HEK293 (cell line): ENCODE measurements at regions of chr20 and their contacts with region 1.

Region 1: GRCh38 chr20:3551681-3552434 is 81.0 kb downstream of the ATRN start:
- H3K4me3 ChIP-seq: no peak overlapping the region
- H3K27ac ChIP-seq: no peak overlapping the region
- H3K4me1 ChIP-seq: no peaks in the 10 kb centered on the region
- CTCF ChIP-seq: no peak

Region 2: GRCh38 chr20:3563548-3564177 is 11.8 kb after region 1 on chr20:
- CTCF ChIA-PET with region 1: interaction called, 26 read pairs
- POLR2A ChIA-PET with region 1: no interaction called
- H3K4me3 ChIP-seq: no peak overlapping the region
- H3K27ac ChIP-seq: no peak overlapping the region
- H3K4me1 ChIP-seq: no peaks in the 10 kb centered on the region
- CTCF ChIP-seq: peak; percentile 60